ENCODE measurements at regions of chr4 and their contacts with region 1.

Region 1: DNA sequence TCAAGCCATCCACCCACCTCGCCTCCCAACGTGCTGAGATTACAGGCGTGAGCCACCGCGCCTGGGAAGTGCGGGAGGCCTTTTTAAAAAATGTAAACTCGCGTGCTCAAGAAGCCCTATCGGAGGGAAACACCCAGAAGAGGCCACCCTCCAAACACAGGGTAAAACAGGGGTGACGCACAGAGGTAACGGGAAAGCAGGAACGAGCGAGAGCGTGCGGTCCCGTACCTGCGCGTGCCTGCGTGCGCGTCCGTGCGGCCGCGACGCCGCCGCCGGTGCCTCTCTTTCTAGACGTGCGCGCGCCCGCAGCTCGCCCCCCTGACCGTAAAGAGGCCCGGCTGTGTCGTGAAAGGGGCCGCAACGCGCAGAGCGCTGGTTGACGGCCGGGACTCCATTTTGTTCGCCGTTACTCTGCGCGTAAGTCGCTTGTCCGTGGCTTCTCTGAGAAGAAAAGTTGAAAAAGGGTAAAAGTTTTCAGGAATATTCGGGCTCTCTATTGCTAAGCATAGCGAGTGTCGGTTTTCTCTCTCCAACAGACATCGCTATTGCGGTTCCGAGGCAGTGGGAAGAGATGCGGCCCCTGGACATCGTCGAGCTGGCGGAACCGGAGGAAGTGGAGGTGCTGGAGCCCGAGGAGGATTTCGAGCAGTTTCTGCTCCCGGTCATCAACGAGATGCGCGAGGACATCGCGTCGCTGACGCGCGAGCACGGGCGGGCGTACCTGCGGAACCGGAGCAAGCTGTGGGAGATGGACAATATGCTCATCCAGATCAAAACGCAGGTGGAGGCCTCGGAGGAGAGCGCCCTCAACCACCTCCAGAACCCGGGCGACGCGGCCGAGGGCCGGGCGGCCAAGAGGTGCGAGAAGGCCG is at the start of gene MRFAP1:
- DNase-seq: peak; percentile 92
- H3K4me3 Mint-ChIP-seq: peak within 1 kb of the TSS; percentile 95
- H3K27ac Mint-ChIP-seq: peak within 1 kb of the TSS; percentile 98
- H3K4me1 Mint-ChIP-seq: peaks cover 24% of the 10 kb centered on the region
- H3K27me3 Mint-ChIP-seq: peaks cover 1% of the 10 kb centered on the region
- total RNA-seq, gene MRFAP1: 115 and 119 TPM in 2 replicates

Region 2: GRCh38 chr4:6658597-6659075 is 18.1 kb after region 1 on chr4:
- intact Hi-C with region 1: loop called (anchors 2 kb)
- DNase-seq: peak; percentile 44
- H3K4me3 Mint-ChIP-seq: peak overlapping the region; percentile 59
- H3K27ac Mint-ChIP-seq: no peak overlapping the region
- H3K4me1 Mint-ChIP-seq: peaks cover 8% of the 10 kb centered on the region
- H3K27me3 Mint-ChIP-seq: peaks cover 31% of the 10 kb centered on the region

Region 3: GRCh38 chr4:6709230-6710114 is 68.9 kb after region 1 on chr4 and contains the start of gene MRFAP1L1:
- intact Hi-C with region 1: loop called (anchors 1 kb)
- DNase-seq: peak; percentile 95
- H3K4me3 Mint-ChIP-seq: peak within 1 kb of the TSS; percentile 98
- H3K27ac Mint-ChIP-seq: peak within 1 kb of the TSS; percentile 95
- H3K4me1 Mint-ChIP-seq: peaks cover 62% of the 10 kb centered on the region
- H3K27me3 Mint-ChIP-seq: peaks cover 3% of the 10 kb centered on the region
- total RNA-seq, gene MRFAP1L1: 51.7 and 53.9 TPM in 2 replicates

Region 4: GRCh38 chr4:6855692-6856297 is 215.3 kb after region 1 on chr4:
- intact Hi-C with region 1: loop called (anchors 5 kb)
- DNase-seq: peak; percentile 12
- H3K4me3 Mint-ChIP-seq: no peak overlapping the region
- H3K27ac Mint-ChIP-seq: peak overlapping the region; percentile 85
- H3K4me1 Mint-ChIP-seq: peaks cover 27% of the 10 kb centered on the region
- H3K27me3 Mint-ChIP-seq: no peaks in the 10 kb centered on the region

Region 5: GRCh38 chr4:7067452-7068278 is 427.1 kb after region 1 on chr4 and contains the start of gene GRPEL1:
- intact Hi-C with region 1: loop called (anchors 1 kb)
- DNase-seq: peak; percentile 100
- H3K4me3 Mint-ChIP-seq: peak within 1 kb of the TSS; percentile 94
- H3K27ac Mint-ChIP-seq: peak within 1 kb of the TSS; percentile 94
- H3K4me1 Mint-ChIP-seq: peaks cover 50% of the 10 kb centered on the region
- H3K27me3 Mint-ChIP-seq: peaks cover 16% of the 10 kb centered on the region
- total RNA-seq, gene GRPEL1: 106 and 115 TPM in 2 replicates

Measured in activated T-helper 1 cell treated with anti-CD3 and anti-CD28 coated beads, Interleukin-12 subunit alpha, Interleukin-12 subunit beta, Interleukin-2, Interleukin-4 antibody, amounts not matched to agents 30 ng/mL and 10 ng/mL and 1 ng/mL, durations not matched to agents 14 hours and 24 hours and 36 hours (primary cell).